Ovary (tissue), 10 donors: ENCODE measurements at regions of chr5 and their contacts with region 1.

Region 1: DNA sequence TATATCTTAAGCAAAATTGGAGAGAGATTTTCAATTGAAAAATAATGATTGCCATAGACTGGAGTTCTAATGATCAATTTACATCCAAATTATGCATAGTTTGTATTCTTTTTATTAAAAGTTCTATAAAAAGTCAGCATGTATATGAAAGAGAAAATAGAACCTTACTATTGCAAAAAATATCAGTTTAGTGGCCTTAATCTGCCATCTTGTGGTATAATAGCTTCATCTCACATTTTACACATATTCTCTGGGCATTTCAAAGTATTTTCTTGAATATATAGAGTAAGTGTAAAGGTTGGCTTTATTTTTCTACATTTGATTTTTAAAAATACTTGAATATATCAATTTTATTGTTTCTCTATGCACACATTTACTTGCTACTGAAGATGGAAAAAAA is 1858.6 kb upstream of the CDH9 start:
- DNase-seq: no peak
- H3K4me3 ChIP-seq: no peak overlapping the region
- H3K27ac ChIP-seq: no peak overlapping the region
- H3K4me1 ChIP-seq: no peaks in the 10 kb centered on the region
- H3K27me3 ChIP-seq: no peaks in the 10 kb centered on the region
- CTCF ChIP-seq: no peak
- EP300 ChIP-seq: no peak
- POLR2A ChIP-seq: no peak

Region 2: GRCh38 chr5:28850320-28850921 is 46.5 kb before region 1 on chr5:
- intact Hi-C with region 1: no loop called
- DNase-seq: no peak
- H3K4me3 ChIP-seq: no peak overlapping the region
- H3K27ac ChIP-seq: no peak overlapping the region
- H3K4me1 ChIP-seq: no peaks in the 10 kb centered on the region
- H3K27me3 ChIP-seq: no peaks in the 10 kb centered on the region
- CTCF ChIP-seq: no peak
- EP300 ChIP-seq: no peak
- POLR2A ChIP-seq: no peak

Region 3: DNA sequence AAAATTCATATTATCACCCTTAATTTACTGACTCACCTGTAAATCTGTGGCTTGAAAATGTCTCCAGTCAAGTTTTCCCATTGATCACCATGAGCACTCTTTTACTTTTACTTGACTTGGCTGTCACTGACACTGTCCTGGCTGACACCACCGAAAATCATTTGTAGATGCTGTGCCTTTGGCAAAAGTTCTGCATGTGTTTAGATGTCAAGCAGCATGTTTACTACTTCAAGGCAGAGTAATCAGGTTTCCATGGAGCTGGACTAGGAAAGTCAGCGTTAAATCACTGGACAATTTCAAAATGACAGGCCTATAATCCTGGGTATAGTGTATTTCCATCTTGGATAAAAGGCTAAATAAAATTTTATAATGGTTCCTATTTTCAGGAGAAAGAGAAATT is 765.9 kb after region 1 on chr5:
- intact Hi-C with region 1: loop called in 1 of 4 experiments (anchors 5 kb)
- DNase-seq: no peak
- H3K4me3 ChIP-seq: no peak overlapping the region
- H3K27ac ChIP-seq: no peak overlapping the region
- H3K4me1 ChIP-seq: no peaks in the 10 kb centered on the region
- H3K27me3 ChIP-seq: no peaks in the 10 kb centered on the region
- CTCF ChIP-seq: no peak
- EP300 ChIP-seq: no peak
- POLR2A ChIP-seq: no peak